ENCODE measurements at regions of chr14 and their contacts with region 1.

Region 1: DNA sequence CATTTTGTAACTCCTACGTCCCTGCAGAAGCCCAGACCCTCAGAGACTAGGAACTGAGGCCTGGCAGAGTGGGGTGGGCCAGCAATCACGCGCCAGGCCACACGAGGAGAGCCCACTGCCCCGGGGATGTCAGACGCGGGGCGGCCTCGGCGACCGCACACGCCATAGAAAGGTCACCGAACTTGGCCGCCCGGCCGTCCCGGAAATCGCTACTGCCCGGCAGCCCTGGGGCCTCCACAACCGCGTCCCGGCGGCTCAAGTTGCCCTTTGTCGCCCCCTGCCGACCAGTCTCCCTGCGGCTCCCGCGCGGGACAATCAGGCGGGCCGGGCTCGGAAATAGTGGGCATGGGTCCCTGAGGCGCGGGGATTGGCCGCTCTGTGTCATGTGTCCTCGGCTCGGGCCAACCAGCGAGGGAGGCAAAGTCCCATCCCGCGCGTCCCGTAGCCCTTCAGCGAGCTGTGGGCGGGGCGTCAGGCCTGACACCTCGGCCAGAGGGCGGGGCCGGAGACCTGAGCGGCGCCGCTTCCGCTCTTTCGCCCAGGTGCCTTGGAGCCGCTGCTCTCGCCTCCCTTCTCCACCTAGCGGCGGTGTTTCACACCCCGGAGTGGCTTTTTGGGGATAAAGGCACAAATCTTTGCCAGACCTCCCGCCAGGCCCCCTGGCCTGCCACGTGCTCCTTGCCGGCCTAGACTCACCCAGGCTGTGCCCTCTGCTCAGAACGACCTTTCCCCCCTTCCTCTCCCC is 33.4 kb upstream of the DEGS2 start:
- DNase-seq: peak; percentile 100
- ATAC-seq: peak; percentile 100
- H3K4me3 Mint-ChIP-seq: peak overlapping the region; percentile 58
- H3K27ac Mint-ChIP-seq: peak overlapping the region; percentile 90
- H3K4me1 Mint-ChIP-seq: peaks cover 15% of the 10 kb centered on the region
- H3K27me3 Mint-ChIP-seq: no peaks in the 10 kb centered on the region

Region 2: DNA sequence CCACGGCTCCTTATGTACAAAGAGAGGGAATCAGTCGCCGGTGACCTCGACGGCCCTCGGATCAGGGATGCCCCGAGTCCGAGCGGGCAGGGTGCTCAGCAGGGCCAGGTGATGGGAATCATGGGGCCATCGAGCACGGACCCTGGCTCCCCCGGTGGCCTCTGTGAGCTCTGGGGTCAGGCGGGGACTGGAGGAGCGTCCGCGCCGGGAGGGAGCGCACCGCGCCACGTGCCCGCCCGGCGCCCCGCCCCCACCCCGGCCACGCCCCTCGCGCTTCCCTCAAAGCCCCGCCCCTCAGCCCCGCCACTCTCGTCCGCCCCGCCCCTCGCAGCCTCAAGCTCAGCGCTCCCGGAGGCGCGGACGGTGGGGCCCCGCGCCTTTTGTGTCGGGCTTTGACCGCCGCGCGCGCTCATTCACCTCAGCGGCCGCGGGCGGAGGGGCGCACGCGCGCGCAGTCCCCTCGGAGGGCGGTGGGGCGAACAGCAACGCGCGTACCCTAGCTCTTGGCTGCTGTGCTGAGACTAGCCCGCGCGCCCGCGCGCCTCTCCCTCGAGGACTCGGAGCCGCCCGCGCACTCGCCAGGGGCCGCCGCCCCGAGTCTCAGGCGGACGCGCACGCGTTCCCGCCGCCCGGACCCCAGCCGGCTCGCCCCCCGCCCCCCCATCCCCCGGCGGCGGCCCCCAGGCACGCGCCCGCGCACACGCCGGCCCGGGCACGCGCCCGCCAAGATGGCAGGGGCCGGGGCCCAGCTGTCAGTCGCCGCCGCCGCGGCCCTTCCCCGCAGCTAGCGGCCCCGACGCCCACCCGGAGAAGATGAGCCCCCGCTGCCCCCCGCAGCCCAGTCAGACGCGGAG is 221.5 kb before region 1 on chr14:
- CTCF ChIA-PET with region 1: interaction called, 14 read pairs
- DNase-seq: peak; percentile 84
- ATAC-seq: peak; percentile 82
- H3K4me3 Mint-ChIP-seq: peak overlapping the region; percentile 89
- H3K27ac Mint-ChIP-seq: no peak overlapping the region
- H3K4me1 Mint-ChIP-seq: peaks cover 17% of the 10 kb centered on the region
- H3K27me3 Mint-ChIP-seq: peaks cover 36% of the 10 kb centered on the region

Region 3: GRCh38 chr14:100056964-100057795 is 135.7 kb before region 1 on chr14:
- CTCF ChIA-PET with region 1: interaction called, 15 read pairs
- DNase-seq: no peak
- ATAC-seq: peak; percentile 69
- H3K4me3 Mint-ChIP-seq: no peak overlapping the region
- H3K27ac Mint-ChIP-seq: peak overlapping the region; percentile 76
- H3K4me1 Mint-ChIP-seq: peaks cover 60% of the 10 kb centered on the region
- H3K27me3 Mint-ChIP-seq: no peaks in the 10 kb centered on the region

Region 4: GRCh38 chr14:100108042-100108825 is 84.6 kb before region 1 on chr14:
- CTCF ChIA-PET with region 1: interaction called, 29 read pairs
- DNase-seq: peak; percentile 89
- ATAC-seq: peak; percentile 68
- H3K4me3 Mint-ChIP-seq: no peak overlapping the region
- H3K27ac Mint-ChIP-seq: peak overlapping the region; percentile 90
- H3K4me1 Mint-ChIP-seq: peaks cover 71% of the 10 kb centered on the region
- H3K27me3 Mint-ChIP-seq: no peaks in the 10 kb centered on the region

Region 5: GRCh38 chr14:100213956-100214774 is 21.3 kb after region 1 on chr14:
- CTCF ChIA-PET with region 1: interaction called, 56 read pairs
- DNase-seq: peak; percentile 94
- ATAC-seq: peak; percentile 96
- H3K4me3 Mint-ChIP-seq: peak overlapping the region; percentile 68
- H3K27ac Mint-ChIP-seq: peak overlapping the region; percentile 88
- H3K4me1 Mint-ChIP-seq: peaks cover 31% of the 10 kb centered on the region
- H3K27me3 Mint-ChIP-seq: no peaks in the 10 kb centered on the region

Region 6: DNA sequence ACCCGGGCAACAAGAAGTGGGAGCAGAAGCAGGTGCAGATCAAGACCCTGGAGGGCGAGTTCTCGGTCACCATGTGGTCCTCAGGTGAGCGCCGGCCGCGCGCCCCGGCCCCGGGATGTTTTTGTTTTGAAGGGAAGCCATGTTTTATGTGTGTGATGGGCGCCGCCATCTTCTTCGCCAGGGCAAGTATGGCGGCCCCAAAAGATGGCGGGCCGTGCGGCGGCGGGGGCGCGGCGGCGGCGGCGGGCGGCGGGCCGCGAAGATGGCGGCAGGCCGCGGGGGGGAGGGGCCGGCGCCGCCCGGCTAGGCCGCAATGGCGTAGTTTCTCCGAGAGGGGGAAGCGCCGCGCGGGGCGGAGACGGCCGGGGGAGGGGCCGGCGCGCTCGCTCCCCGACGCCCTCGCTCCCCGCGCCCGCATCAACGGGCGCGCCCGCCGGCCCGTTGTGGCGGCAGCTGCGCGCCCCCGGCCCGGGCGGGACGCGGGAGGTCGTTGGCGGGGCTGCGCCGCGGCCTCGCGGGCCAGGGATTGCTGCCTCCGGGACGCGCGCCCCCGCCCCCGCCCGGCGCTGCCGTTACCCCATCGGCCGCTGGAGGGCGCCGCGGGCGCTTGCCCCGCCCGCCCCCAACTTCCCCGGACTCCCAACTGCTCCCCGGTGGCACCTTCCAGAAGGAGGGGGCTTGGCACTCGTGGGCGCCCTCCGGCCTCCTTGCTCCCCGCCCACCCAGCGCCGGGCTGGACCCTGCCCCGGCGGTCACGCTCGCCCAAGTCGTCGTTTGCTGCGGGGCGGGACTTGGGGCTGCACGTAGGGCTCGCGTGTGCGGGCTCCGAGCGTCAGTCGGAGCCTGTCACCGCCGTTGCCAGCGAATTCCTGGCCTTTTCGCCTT is 47.2 kb after region 1 on chr14:
- CTCF ChIA-PET with region 1: interaction called, 34 read pairs
- DNase-seq: peak; percentile 87
- ATAC-seq: peak; percentile 42
- H3K4me3 Mint-ChIP-seq: peak overlapping the region; percentile 97
- H3K27ac Mint-ChIP-seq: peak overlapping the region; percentile 89
- H3K4me1 Mint-ChIP-seq: peaks cover 46% of the 10 kb centered on the region
- H3K27me3 Mint-ChIP-seq: no peaks in the 10 kb centered on the region